ENCODE measurements at regions of chr17 and their contacts with region 1.

Region 1: GRCh38 chr17:44324571-44325275 is at the start of gene SLC25A39:
- DNase-seq: peak; percentile 97
- ATAC-seq: peak; percentile 72
- H3K4me3 ChIP-seq: peak within 1 kb of the TSS; percentile 35 to 85 (median 81)
- H3K4me3 Mint-ChIP-seq: peak within 1 kb of the TSS; percentile 92
- H3K27ac ChIP-seq: peak within 1 kb of the TSS; percentile 92 to 96
- H3K27ac Mint-ChIP-seq: peak within 1 kb of the TSS; percentile 98
- H3K4me1 ChIP-seq: peaks cover 9 to 30% of the 10 kb centered on the region in 2 donors
- H3K4me1 Mint-ChIP-seq: peaks cover 31% of the 10 kb centered on the region
- H3K27me3 ChIP-seq: no peaks in the 10 kb centered on the region
- H3K27me3 Mint-ChIP-seq: no peaks in the 10 kb centered on the region
- CTCF ChIP-seq: no peak
- total RNA-seq, gene SLC25A39: 86.6 and 88.4 TPM in 2 replicates

Region 2: DNA sequence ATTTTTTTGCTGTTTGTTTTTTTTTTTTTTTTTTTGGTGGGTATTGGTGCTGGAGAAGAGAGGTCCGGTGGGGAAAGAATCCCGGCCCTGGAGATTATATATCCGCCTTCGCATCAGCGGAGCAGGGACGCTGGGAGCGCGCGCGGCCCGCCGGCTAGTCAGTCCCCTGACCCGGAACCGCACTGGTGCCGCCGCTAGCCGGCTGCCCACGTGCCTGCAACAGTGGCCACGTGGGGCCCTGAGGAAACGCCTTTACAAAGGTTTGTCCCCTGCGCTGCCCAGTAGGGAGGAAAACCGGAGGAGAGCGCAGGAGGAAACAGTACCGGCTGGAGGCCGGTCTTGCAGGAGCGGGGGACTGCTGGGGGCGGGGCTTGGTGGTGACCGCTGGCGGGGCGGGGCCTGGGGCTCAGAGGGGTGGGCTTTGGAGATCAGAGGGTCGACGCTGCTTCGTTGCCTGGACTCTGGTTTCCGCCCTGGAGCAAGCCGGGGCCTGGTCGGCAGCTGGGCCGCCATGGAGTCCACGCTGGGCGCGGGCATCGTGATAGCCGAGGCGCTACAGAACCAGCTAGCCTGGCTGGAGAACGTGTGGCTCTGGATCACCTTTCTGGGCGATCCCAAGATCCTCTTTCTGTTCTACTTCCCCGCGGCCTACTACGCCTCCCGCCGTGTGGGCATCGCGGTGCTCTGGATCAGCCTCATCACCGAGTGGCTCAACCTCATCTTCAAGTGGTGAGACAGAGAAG is 254.1 kb before region 1 on chr17 and contains the start of gene G6PC3:
- CTCF ChIA-PET with region 1: no interaction called
- POLR2A ChIA-PET with region 1: no interaction called
- intact Hi-C with region 1: loop called (anchors 2 kb)
- DNase-seq: peak; percentile 85
- ATAC-seq: peak; percentile 73
- H3K4me3 ChIP-seq: peak within 1 kb of the TSS; percentile 42 to 87 (median 73)
- H3K4me3 Mint-ChIP-seq: peak within 1 kb of the TSS; percentile 93
- H3K27ac ChIP-seq: peak within 1 kb of the TSS; percentile 31 to 65
- H3K27ac Mint-ChIP-seq: peak within 1 kb of the TSS; percentile 82
- H3K4me1 ChIP-seq: peaks cover 22 to 32% of the 10 kb centered on the region in 2 donors
- H3K4me1 Mint-ChIP-seq: peaks cover 36% of the 10 kb centered on the region
- H3K27me3 ChIP-seq: no peaks in the 10 kb centered on the region
- H3K27me3 Mint-ChIP-seq: no peaks in the 10 kb centered on the region
- CTCF ChIP-seq: no peak
- total RNA-seq, gene G6PC3: 26.7 and 28.5 TPM in 2 replicates

Region 3: GRCh38 chr17:44130693-44131349 is 193.9 kb before region 1 on chr17:
- CTCF ChIA-PET with region 1: no interaction called
- POLR2A ChIA-PET with region 1: no interaction called
- intact Hi-C with region 1: no loop called
- DNase-seq: no peak
- ATAC-seq: no peak
- H3K4me3 ChIP-seq: no peak overlapping the region
- H3K4me3 Mint-ChIP-seq: no peak overlapping the region
- H3K27ac ChIP-seq: no peak overlapping the region
- H3K27ac Mint-ChIP-seq: no peak overlapping the region
- H3K4me1 ChIP-seq: no peaks in the 10 kb centered on the region
- H3K4me1 Mint-ChIP-seq: no peaks in the 10 kb centered on the region
- H3K27me3 ChIP-seq: no peaks in the 10 kb centered on the region
- H3K27me3 Mint-ChIP-seq: no peaks in the 10 kb centered on the region
- CTCF ChIP-seq: no peak

Region 4: GRCh38 chr17:44186307-44187130 is 138.2 kb before region 1 on chr17 and contains the start of gene TMUB2:
- CTCF ChIA-PET with region 1: interaction called, 3 read pairs
- POLR2A ChIA-PET with region 1: interaction called, 6 read pairs
- intact Hi-C with region 1: loop called (anchors 1 kb)
- DNase-seq: peak; percentile 100
- ATAC-seq: peak; percentile 97
- H3K4me3 ChIP-seq: peak within 1 kb of the TSS; percentile 63 to 99 (median 90)
- H3K4me3 Mint-ChIP-seq: peak within 1 kb of the TSS; percentile 98
- H3K27ac ChIP-seq: peak within 1 kb of the TSS; percentile 93 to 97
- H3K27ac Mint-ChIP-seq: peak within 1 kb of the TSS; percentile 100
- H3K4me1 ChIP-seq: peaks cover 22 to 26% of the 10 kb centered on the region in 2 donors
- H3K4me1 Mint-ChIP-seq: peaks cover 40% of the 10 kb centered on the region
- H3K27me3 ChIP-seq: no peaks in the 10 kb centered on the region
- H3K27me3 Mint-ChIP-seq: no peaks in the 10 kb centered on the region
- CTCF ChIP-seq: no peak
- total RNA-seq, gene TMUB2: 50.9 and 52.3 TPM in 2 replicates

Region 5: DNA sequence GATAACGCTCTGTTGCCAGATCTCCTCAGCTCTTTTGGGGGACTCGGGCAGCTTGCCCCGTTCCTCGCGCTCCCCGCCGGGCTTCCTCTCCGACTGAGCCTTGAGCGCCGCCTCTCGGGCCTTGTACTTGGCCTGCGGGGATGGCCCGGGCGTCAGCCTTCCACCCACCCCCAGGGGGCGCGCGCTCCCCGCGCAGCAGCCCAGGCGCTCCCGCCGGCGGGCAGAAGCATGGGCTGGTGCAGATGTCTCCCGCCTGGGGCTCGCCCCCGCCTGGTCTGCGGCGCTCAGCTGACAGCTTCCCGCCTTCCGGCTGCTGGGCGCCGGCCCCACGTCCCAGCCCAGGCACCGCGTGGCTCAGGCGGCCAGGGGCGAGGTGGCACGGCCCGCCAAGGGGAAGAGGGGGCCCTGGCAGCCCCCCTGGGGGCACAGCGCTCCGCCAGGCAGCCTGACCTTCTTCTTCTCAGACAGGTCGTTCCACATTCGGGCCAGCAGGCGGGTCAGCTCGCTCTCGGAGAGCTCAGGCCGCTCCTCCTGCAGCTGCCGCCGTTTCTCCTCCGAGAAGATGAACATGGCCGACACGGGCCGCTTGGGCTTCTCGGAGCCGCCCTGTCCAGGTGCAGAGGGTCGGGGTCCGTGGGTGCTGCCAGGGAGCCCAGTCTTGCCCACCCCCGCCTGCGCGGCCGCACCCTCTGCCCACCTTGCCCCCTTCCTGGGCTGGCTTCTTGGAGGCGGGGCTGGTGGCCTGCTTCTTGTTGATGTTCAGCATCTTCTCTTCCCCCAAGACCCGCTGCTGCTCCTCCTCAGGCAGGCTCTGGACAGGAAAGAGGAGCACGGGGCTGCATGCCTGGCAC is 114.2 kb before region 1 on chr17:
- CTCF ChIA-PET with region 1: interaction called, 44 read pairs
- POLR2A ChIA-PET with region 1: interaction called, 7 read pairs
- intact Hi-C with region 1: loop called (anchors 1 kb)
- DNase-seq: peak; percentile 93
- ATAC-seq: peak; percentile 98
- H3K4me3 ChIP-seq: no peak overlapping the region
- H3K4me3 Mint-ChIP-seq: peak overlapping the region; percentile 34
- H3K27ac ChIP-seq: peak overlapping the region; percentile 41 to 71
- H3K27ac Mint-ChIP-seq: peak overlapping the region; percentile 74
- H3K4me1 ChIP-seq: peaks cover 29 to 49% of the 10 kb centered on the region in 2 donors
- H3K4me1 Mint-ChIP-seq: peaks cover 46% of the 10 kb centered on the region
- H3K27me3 ChIP-seq: no peaks in the 10 kb centered on the region
- H3K27me3 Mint-ChIP-seq: no peaks in the 10 kb centered on the region
- CTCF ChIP-seq: peak; percentile 99

Region 6: DNA sequence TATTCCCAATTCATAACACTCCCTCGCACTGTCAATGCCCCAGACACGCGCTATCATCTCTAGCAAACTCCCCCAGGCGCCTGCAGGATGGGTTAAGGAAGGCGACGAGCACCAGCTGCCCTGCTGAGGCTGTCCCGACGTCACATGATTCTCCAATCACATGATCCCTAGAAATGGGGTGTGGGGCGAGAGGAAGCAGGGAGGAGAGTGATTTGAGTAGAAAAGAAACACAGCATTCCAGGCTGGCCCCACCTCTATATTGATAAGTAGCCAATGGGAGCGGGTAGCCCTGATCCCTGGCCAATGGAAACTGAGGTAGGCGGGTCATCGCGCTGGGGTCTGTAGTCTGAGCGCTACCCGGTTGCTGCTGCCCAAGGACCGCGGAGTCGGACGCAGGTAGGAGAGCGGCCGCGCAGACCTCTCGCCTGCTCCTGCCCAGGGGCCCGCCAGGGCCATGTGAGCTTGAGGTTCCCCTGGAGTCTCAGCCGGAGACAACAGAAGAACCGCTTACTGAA is 20.3 kb after region 1 on chr17 and contains the start of gene GRN:
- CTCF ChIA-PET with region 1: interaction called, 117 read pairs
- POLR2A ChIA-PET with region 1: interaction called, 10 read pairs
- intact Hi-C with region 1: loop called (anchors 1 kb)
- DNase-seq: peak; percentile 91
- ATAC-seq: peak; percentile 76
- H3K4me3 ChIP-seq: peak within 1 kb of the TSS; percentile 61 to 94 (median 91)
- H3K4me3 Mint-ChIP-seq: peak within 1 kb of the TSS; percentile 96
- H3K27ac ChIP-seq: peak within 1 kb of the TSS; percentile 85 to 89
- H3K27ac Mint-ChIP-seq: peak within 1 kb of the TSS; percentile 90
- H3K4me1 ChIP-seq: peaks cover 37 to 52% of the 10 kb centered on the region in 2 donors
- H3K4me1 Mint-ChIP-seq: peaks cover 45% of the 10 kb centered on the region
- H3K27me3 ChIP-seq: no peaks in the 10 kb centered on the region
- H3K27me3 Mint-ChIP-seq: no peaks in the 10 kb centered on the region
- CTCF ChIP-seq: no peak
- total RNA-seq, gene GRN: 185 and 187 TPM in 2 replicates

Measured in B cell (primary cell).